GM12878 (cell line): ENCODE measurements at regions of chr12 and their contacts with region 1.

Region 1: GRCh38 chr12:92973601-92974000 is 44.5 kb upstream of the EEA1 start:
- DNase-seq: peak; percentile 95
- ATAC-seq: peak; percentile 62
- H3K4me3 ChIP-seq: no peak overlapping the region
- H3K27ac ChIP-seq: peak overlapping the region; percentile 91
- H3K4me1 ChIP-seq: peaks cover 55% of the 10 kb centered on the region
- H3K27me3 ChIP-seq: no peaks in the 10 kb centered on the region
- CTCF ChIP-seq: no peak
- EP300 ChIP-seq: peak; percentile 20 to 21; a peak in 1 of 4 replicates
- POLR2A ChIP-seq: no peak
- RAD21 ChIP-seq: no peak

Region 2: DNA sequence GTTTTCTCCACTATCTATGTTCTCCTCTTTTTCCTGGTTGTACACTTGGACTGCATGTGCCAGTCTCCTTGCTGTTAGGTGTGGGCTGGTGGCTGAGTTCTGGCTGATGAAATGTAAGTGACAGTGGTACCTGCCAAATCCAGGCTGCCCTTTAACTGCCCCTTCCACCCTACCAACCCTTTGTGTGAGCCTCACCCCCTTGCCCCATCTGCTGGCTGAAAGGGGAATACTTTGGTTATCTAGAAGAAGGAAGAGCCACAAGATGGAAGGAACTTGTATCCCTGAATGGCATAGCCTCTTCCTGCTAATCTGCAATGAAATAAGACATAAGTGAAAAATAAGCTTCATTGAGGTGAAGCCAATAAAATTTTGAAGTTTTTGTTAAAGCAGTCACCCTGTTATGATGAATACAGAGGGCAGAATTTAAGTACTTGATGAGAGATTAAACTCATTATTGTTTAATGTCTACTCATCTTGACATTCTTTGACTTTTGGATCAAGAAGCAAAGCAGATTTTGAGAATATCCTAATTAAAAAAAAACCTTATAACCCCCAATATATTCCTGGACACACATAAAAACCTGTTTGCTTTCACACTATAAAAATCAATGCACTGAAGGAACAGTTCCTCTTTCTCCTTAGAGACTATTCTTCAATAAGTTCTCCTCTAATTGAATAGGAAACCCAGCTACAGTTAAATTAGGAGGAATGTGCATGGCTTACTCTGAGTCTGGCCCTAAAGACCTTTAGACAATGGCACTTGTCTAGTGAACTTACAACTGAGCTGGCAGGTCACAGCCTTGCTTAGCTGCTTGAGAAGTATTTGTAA is 565.3 kb before region 1 on chr12:
- CTCF ChIA-PET with region 1: no interaction called
- POLR2A ChIA-PET with region 1: no interaction called
- RAD21 ChIA-PET with region 1: no interaction called
- SMC1A ChIA-PET with region 1: no interaction called
- in situ Hi-C with region 1: no loop called
- intact Hi-C with region 1: no loop called
- DNase-seq: no peak
- ATAC-seq: peak; percentile 74
- H3K4me3 ChIP-seq: no peak overlapping the region
- H3K27ac ChIP-seq: peak overlapping the region; percentile 24
- H3K4me1 ChIP-seq: peaks cover 31% of the 10 kb centered on the region
- H3K27me3 ChIP-seq: no peaks in the 10 kb centered on the region
- CTCF ChIP-seq: peak; percentile 58 to 82 (median 72)
- EP300 ChIP-seq: no peak
- POLR2A ChIP-seq: no peak
- RAD21 ChIP-seq: peak; percentile 94

Region 3: GRCh38 chr12:92702754-92703679 is 270.6 kb before region 1 on chr12 and contains the start of gene PLEKHG7:
- CTCF ChIA-PET with region 1: no interaction called
- POLR2A ChIA-PET with region 1: no interaction called
- RAD21 ChIA-PET with region 1: interaction called, 4 read pairs
- SMC1A ChIA-PET with region 1: interaction called, 3 read pairs
- in situ Hi-C with region 1: no loop called
- intact Hi-C with region 1: loop called (anchors 5 kb)
- DNase-seq: peak; percentile 80
- ATAC-seq: peak; percentile 91
- H3K4me3 ChIP-seq: peak within 1 kb of the TSS; percentile 69
- H3K27ac ChIP-seq: peak within 1 kb of the TSS; percentile 81
- H3K4me1 ChIP-seq: peaks cover 25% of the 10 kb centered on the region
- H3K27me3 ChIP-seq: no peaks in the 10 kb centered on the region
- CTCF ChIP-seq: no peak
- EP300 ChIP-seq: peak in 1 of 2 experiments; percentile 28; a peak in 1 of 4 replicates
- POLR2A ChIP-seq: peak; percentile 63; the same call in 1 of the 2 replicates
- RAD21 ChIP-seq: 0 out of 2 replicates have a peak, but pooled peaks have one; percentile 1
- polyA plus RNA-seq, gene PLEKHG7: 0.16 to 0.34 TPM

Region 4: DNA sequence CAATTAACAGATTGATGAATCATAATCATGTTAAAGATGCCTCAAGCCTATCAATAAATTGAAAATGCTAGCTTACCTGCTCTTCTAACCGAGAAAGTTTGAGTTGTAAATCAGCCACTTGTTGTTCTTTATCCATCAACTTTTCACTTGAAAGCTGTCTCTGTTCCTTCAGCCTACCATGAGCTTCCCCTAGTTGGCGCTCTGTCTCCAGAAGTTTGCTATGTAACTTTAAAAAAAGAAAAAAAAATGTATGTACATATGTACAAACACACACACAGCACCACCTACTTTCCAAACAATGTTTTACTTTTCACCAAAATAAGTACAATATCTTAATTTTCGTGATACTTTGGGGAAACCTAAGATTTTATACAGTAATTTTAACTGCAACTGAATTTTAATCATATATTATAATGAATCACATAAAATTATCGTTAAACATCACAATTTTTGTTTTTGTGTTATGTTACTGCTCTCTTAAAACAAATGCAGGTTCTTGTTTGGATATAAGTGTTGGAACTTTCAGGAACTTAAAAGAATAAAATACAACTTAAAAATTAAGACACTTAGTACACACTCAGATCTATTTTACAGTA is 145.7 kb before region 1 on chr12:
- CTCF ChIA-PET with region 1: no interaction called
- POLR2A ChIA-PET with region 1: no interaction called
- RAD21 ChIA-PET with region 1: no interaction called
- SMC1A ChIA-PET with region 1: interaction called, 3 read pairs
- in situ Hi-C with region 1: no loop called
- intact Hi-C with region 1: loop called (anchors 5 kb)
- DNase-seq: peak; percentile 12
- ATAC-seq: peak; percentile 81
- H3K4me3 ChIP-seq: no peak overlapping the region
- H3K27ac ChIP-seq: no peak overlapping the region
- H3K4me1 ChIP-seq: no peaks in the 10 kb centered on the region
- H3K27me3 ChIP-seq: no peaks in the 10 kb centered on the region
- CTCF ChIP-seq: peak; percentile 65 to 81 (median 81)
- EP300 ChIP-seq: no peak
- POLR2A ChIP-seq: no peak
- RAD21 ChIP-seq: peak; percentile 67

Region 5: DNA sequence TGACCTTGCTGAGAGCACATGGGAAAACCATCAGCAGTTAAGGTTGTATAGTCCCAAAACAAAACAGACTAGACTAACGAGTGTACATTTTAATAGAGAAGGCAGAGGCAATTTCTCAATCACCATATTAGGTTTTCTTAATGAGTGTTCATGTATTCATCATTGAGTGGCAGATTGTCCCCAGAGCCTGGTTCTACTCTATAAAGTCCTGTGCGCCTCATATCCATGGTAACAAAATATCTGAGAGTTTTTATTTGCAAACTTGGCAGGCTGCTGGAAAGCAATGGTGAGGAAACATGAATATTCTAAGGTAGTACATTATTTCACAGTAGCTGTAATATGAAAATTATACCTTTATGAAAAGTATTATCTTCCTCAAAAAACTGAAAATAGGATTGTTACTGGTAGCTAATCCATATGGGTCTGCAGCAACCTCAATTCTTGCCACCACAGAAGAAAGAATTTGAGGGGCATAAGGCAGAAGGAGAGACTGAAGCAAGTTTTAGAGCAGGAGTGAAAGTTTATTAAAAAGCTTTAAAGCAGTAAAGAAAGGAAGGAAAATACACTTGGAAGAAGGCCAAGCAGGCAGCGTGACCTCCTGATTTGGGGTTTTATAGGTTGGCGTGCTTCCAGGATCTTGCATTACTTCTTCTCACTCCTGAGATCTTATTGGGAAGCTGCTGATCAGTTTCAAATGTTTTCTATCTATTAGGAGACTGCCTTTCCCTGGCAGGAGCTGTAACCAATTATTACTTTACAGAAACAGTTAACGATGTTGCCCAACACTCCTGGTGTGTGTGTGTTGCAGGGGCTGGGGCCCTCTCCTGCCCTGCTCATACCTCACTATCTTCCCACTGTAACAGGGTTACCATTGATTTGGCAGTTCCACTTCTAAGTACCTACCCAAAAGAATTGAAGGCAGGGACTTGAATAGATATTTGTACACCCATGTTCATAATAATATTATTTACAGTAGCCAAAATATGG is 250.1 kb after region 1 on chr12:
- CTCF ChIA-PET with region 1: no interaction called
- POLR2A ChIA-PET with region 1: no interaction called
- RAD21 ChIA-PET with region 1: no interaction called
- SMC1A ChIA-PET with region 1: no interaction called
- in situ Hi-C with region 1: no loop called
- intact Hi-C with region 1: no loop called
- DNase-seq: no peak
- ATAC-seq: no peak
- H3K4me3 ChIP-seq: no peak overlapping the region
- H3K27ac ChIP-seq: no peak overlapping the region
- H3K4me1 ChIP-seq: no peaks in the 10 kb centered on the region; the same call in 1 of the 2 replicates
- H3K27me3 ChIP-seq: no peaks in the 10 kb centered on the region
- CTCF ChIP-seq: no peak
- EP300 ChIP-seq: no peak
- POLR2A ChIP-seq: no peak
- RAD21 ChIP-seq: no peak

Region 6: GRCh38 chr12:94805749-94806529 is 1832.3 kb after region 1 on chr12:
- CTCF ChIA-PET with region 1: no interaction called
- POLR2A ChIA-PET with region 1: no interaction called
- RAD21 ChIA-PET with region 1: no interaction called
- SMC1A ChIA-PET with region 1: no interaction called
- in situ Hi-C with region 1: loop called (anchors 25 kb)
- intact Hi-C with region 1: no loop called
- DNase-seq: no peak
- ATAC-seq: peak; percentile 80
- H3K4me3 ChIP-seq: no peak overlapping the region
- H3K27ac ChIP-seq: peak overlapping the region; percentile 17
- H3K4me1 ChIP-seq: peaks cover 21% of the 10 kb centered on the region
- H3K27me3 ChIP-seq: no peaks in the 10 kb centered on the region
- CTCF ChIP-seq: no peak
- EP300 ChIP-seq: no peak
- POLR2A ChIP-seq: no peak
- RAD21 ChIP-seq: no peak